Panc1 (cell line): ENCODE measurements at regions of chr10 and their contacts with region 1.

Region 1: DNA sequence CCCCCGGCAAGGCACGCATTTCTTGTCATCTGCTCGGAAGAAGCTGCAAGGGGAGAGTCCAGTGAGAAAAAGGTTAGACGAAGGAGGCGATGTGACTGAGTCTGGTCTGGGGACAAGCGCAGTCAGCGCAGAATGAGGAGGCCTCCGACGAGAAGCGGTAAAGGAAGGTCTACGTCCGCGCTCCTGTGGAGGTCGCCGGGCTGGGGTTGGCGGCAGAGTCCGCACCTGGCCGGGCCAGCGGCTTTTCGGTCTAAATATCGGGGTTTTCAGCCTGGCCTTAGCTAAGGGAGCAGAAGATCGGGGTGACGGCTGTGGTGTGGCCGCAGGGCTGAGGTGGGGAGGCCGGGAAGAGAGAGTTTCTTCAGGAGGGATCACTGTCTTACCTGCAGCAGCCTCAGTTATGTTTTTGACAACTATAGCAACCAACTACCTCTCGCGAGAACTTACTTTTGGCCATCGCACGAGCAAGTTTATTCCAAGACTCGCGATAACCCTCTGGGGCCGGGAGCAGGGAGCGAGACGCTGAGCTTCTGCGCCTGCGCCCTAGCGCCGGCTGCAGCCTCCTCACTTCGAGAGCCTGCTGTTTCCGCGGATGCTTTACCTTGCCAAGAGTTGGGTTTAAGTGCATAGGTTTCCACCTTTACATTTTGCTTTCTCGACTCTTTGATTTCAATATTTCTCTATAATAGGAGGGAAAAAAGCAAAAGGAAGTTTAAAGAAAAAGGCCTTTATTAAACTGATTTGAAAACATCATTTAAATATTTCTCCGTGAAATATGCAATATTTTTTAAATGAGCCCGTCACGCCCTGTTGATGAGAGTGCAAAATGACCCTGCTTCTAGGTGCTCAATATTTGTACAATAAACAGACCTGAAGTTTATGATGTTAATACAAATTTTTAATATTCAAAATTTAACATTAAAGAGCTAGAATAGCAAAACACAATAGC is at the start of gene CFAP70:
- DNase-seq: peak; percentile 93
- ATAC-seq: peak; percentile 97
- H3K4me3 ChIP-seq: peak within 1 kb of the TSS; percentile 73 to 83
- H3K27ac ChIP-seq: peak within 1 kb of the TSS; percentile 76
- H3K4me1 ChIP-seq: peaks cover 9% of the 10 kb centered on the region
- H3K27me3 ChIP-seq: peaks cover 16% of the 10 kb centered on the region; the same call in 1 of the 2 replicates
- CTCF ChIP-seq: no peak
- total RNA-seq, gene CFAP70: 0.10 TPM

Region 2: GRCh38 chr10:73263948-73264347 is 94.7 kb before region 1 on chr10:
- CTCF ChIA-PET with region 1: no interaction called
- POLR2A ChIA-PET with region 1: no interaction called
- in situ Hi-C with region 1: no loop called
- intact Hi-C with region 1: loop called (anchors 10 kb)
- DNase-seq: peak; percentile 47
- ATAC-seq: peak; percentile 47; the same call in 1 of the 2 replicates
- H3K4me3 ChIP-seq: no peak overlapping the region
- H3K27ac ChIP-seq: no peak overlapping the region
- H3K4me1 ChIP-seq: no peaks in the 10 kb centered on the region; the same call in 1 of the 2 replicates
- H3K27me3 ChIP-seq: peaks cover 2% of the 10 kb centered on the region; the same call in 1 of the 2 replicates
- CTCF ChIP-seq: peak; percentile 77; the same call in 1 of the 2 replicates